OCI-LY7 (cell line): ENCODE measurements at regions of chr5 and their contacts with region 1.

Region 1: GRCh38 chr5:173789031-173789920 is 98.9 kb upstream of the CPEB4 start:
- DNase-seq: peak; percentile 31
- H3K4me3 ChIP-seq: no peak overlapping the region
- H3K27ac ChIP-seq: no peak overlapping the region
- H3K4me1 ChIP-seq: peaks cover 63% of the 10 kb centered on the region
- CTCF ChIP-seq: no peak

Region 2: GRCh38 chr5:173823711-173824528 is 34.6 kb after region 1 on chr5:
- CTCF ChIA-PET with region 1: interaction called, 3 read pairs
- POLR2A ChIA-PET with region 1: interaction called, 30 read pairs
- intact Hi-C with region 1: loop called (anchors 2 kb)
- DNase-seq: no peak
- H3K4me3 ChIP-seq: peak overlapping the region; percentile 27
- H3K27ac ChIP-seq: peak overlapping the region; percentile 99
- H3K4me1 ChIP-seq: peaks cover 84% of the 10 kb centered on the region
- CTCF ChIP-seq: no peak

Region 3: GRCh38 chr5:174745590-174746103 is 956.4 kb after region 1 on chr5:
- CTCF ChIA-PET with region 1: no interaction called
- POLR2A ChIA-PET with region 1: no interaction called
- intact Hi-C with region 1: no loop called
- DNase-seq: no peak
- H3K4me3 ChIP-seq: no peak overlapping the region
- H3K27ac ChIP-seq: no peak overlapping the region
- H3K4me1 ChIP-seq: no peaks in the 10 kb centered on the region
- CTCF ChIP-seq: no peak